Motor neuron (in vitro differentiated cells): ENCODE measurements at regions of chr7 and their contacts with region 1.

Region 1: GRCh38 chr7:157875230-157876179 is 538.7 kb downstream of the DNAJB6 start:
- ATAC-seq: peak in 4 of 8 experiments; percentile 66 to 84 (median 70)
- H3K4me3 ChIP-seq: no peak overlapping the region
- H3K27ac ChIP-seq: no peak overlapping the region
- H3K4me1 ChIP-seq: peaks cover 0 to 18% of the 10 kb centered on the region in 2 donors

Region 2: DNA sequence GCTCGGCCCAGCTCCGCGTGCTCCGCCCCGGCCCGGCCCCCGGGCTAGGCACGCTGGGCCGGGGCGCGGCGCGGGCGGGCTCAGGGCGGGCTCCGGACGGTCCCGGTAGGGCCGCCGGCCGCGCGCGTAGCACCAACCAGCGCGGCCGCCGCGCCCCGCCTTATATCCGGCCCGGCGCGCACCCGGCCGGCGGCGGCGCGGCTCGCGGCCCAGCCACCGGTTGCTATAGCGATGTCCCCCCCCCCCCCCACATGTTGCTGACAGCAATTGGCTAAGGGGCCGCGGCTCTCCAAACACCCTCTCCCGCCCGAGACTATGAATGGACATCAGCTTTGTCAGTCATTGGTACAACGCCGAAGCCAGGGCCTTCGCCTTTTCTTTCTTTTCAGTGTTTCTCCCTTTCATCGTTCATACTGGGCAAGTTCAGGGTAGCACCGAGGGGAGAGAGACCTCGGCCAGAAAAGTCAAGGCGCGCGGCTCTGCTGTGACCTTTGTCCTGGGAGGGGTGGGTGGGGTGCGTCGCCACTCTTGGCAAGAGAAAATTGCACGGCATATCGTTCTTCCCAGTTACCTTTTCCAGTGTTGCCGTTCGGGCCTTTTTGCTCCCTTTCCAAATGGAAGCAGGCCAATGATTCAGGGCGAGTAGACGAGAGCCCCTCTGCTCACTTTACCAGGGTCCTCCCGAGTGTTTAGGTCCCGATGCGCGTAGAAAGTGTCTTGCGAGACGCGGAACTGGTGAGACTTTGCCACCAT is 184.5 kb before region 1 on chr7:
- in situ Hi-C with region 1: loop called in 1 of 9 experiments (anchors 25 kb)
- ATAC-seq: peak in 5 of 8 experiments; percentile 29 to 82 (median 52)
- H3K4me3 ChIP-seq: peak overlapping the region in 3 of 5 donors; percentile 32 to 70 (median 41)
- H3K27ac ChIP-seq: no peak overlapping the region
- H3K4me1 ChIP-seq: peaks cover 11 to 32% of the 10 kb centered on the region in 2 donors